ENCODE measurements at regions of chr20 and their contacts with region 1.

Region 1: GRCh38 chr20:37656945-37657344 is 36.9 kb upstream of the CTNNBL1 start:
- DNase-seq: no peak
- ATAC-seq: no peak
- H3K4me3 ChIP-seq: no peak overlapping the region
- H3K27ac ChIP-seq: no peak overlapping the region
- H3K4me1 ChIP-seq: no peaks in the 10 kb centered on the region
- H3K27me3 ChIP-seq: no peaks in the 10 kb centered on the region
- CTCF ChIP-seq: no peak
- POLR2A ChIP-seq: no peak

Region 2: GRCh38 chr20:37642246-37642645 is 14.7 kb before region 1 on chr20:
- intact Hi-C with region 1: loop called in 1 of 10 experiments (anchors 1 kb)
- DNase-seq: no peak
- ATAC-seq: no peak
- H3K4me3 ChIP-seq: no peak overlapping the region
- H3K27ac ChIP-seq: no peak overlapping the region
- H3K4me1 ChIP-seq: no peaks in the 10 kb centered on the region
- H3K27me3 ChIP-seq: peaks cover 0 to 40% (median 14%) of the 10 kb centered on the region in 9 donors
- CTCF ChIP-seq: no peak
- POLR2A ChIP-seq: no peak

Measured in heart left ventricle (tissue), 16 donors.